Transverse colon (tissue), 4 donors: ENCODE measurements at regions of chr4 and their contacts with region 1.

Region 1: GRCh38 chr4:54217642-54218495 is 11.2 kb upstream of the PDGFRA start:
- DNase-seq: peak; percentile 69
- H3K4me3 ChIP-seq: peak overlapping the region in 2 of 4 donors; percentile 4 to 40
- H3K27ac ChIP-seq: peak overlapping the region in 1 of 4 donors; percentile 34
- H3K4me1 ChIP-seq: peaks cover 0 to 10% (median 1%) of the 10 kb centered on the region in 4 donors
- H3K27me3 ChIP-seq: peaks cover 34% of the 10 kb centered on the region
- CTCF ChIP-seq: peak; percentile 90 to 94 (median 91)
- EP300 ChIP-seq: no peak
- POLR2A ChIP-seq: no peak

Region 2: DNA sequence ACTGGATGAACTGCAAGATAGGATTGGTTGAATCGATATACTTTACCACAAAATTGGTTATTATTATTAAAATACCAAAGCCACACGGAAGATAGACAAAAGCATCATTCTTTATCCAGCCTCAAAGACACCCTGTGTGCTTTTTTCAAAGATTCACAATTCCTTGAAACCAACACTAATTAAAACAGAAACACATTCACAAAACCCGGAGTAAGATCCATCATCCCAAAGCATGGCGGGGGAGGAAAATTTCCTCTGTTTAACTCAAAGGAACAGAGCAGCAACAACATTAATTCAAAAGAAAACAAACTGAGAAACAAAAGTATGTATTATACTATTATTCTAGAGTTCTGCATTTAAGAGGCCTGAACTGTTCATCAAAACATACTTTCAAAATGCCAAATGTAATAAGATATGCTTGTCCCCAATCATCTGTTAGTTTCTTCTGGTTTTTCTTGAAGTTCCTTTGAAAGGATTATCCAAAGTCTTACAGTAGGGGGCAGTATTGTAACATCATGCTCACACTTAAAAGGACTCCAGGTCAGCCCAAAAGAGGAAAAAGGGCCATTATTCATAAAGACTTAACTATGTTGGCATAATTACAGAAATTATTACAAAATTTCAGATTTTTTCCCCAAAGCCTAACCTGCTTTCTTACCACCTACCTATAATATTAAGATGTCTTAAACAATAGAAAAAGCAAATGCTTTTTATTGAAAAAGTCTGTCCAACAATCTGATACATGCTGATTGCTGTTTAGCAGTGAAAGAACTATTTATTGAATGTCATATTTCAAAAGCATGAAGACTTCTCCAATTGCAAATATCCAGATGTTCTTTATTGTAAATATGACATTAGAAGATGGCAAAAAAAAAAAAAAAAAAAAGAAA is 1020.7 kb before region 1 on chr4:
- in situ Hi-C with region 1: loop called in 3 of 4 experiments (anchors 10 to 25 kb)
- intact Hi-C with region 1: no loop called
- DNase-seq: no peak
- H3K4me3 ChIP-seq: no peak overlapping the region
- H3K27ac ChIP-seq: no peak overlapping the region
- H3K4me1 ChIP-seq: no peaks in the 10 kb centered on the region
- H3K27me3 ChIP-seq: no peaks in the 10 kb centered on the region
- CTCF ChIP-seq: peak; percentile 67 to 78 (median 74)
- EP300 ChIP-seq: no peak
- POLR2A ChIP-seq: no peak

Region 3: GRCh38 chr4:53365486-53366300 is 852.2 kb before region 1 on chr4 and contains the start of gene SCFD2:
- in situ Hi-C with region 1: loop called in 1 of 4 experiments (anchors 25 kb)
- intact Hi-C with region 1: no loop called
- DNase-seq: peak; percentile 99
- H3K4me3 ChIP-seq: peak within 1 kb of the TSS; percentile 62 to 95 (median 69)
- H3K27ac ChIP-seq: peak within 1 kb of the TSS; percentile 53 to 83 (median 68)
- H3K4me1 ChIP-seq: peaks cover 3 to 38% (median 16%) of the 10 kb centered on the region in 4 donors
- H3K27me3 ChIP-seq: no peaks in the 10 kb centered on the region
- CTCF ChIP-seq: no peak
- EP300 ChIP-seq: no peak
- POLR2A ChIP-seq: no peak
- total RNA-seq, gene SCFD2: 12.7 to 23.7 (median 18.3) TPM

Region 4: DNA sequence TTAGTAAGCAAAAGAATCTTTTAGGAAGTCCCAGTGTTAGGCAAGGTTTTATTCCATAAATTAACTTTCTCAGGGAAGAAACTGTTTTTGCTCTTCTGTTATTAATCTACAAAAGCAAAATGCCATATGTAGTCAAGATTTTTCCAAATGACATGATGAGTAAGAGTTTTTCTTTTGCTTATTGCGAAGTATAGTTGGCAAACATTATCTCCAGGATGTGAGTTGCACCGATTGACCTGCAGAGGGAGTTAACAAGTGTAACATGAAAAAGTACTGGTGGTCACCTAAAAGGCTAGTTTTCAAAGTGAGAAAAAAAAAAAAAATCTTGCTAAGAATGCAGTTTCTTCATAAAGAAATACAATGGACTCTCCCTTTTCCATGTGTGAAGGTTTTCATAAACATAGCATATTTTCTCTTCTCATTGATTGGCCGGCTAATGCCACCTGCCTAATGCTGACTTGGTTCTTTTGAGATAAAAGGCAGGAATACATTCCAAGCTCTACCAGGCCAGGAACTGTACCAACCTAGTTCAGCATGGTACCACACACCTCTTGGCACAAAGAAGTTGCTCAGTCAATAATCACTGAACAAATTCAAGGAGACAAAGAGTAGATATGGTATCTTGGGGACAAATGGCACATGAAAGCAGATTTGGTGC is 726.8 kb before region 1 on chr4:
- in situ Hi-C with region 1: loop called in 1 of 4 experiments (anchors 25 kb)
- intact Hi-C with region 1: no loop called
- DNase-seq: peak; percentile 30
- H3K4me3 ChIP-seq: no peak overlapping the region
- H3K27ac ChIP-seq: peak overlapping the region; percentile 28 to 46 (median 38)
- H3K4me1 ChIP-seq: no peaks in the 10 kb centered on the region
- H3K27me3 ChIP-seq: no peaks in the 10 kb centered on the region
- CTCF ChIP-seq: peak; percentile 51 to 72 (median 60)
- EP300 ChIP-seq: no peak
- POLR2A ChIP-seq: no peak

Region 5: GRCh38 chr4:53702334-53703266 is 515.3 kb before region 1 on chr4:
- in situ Hi-C with region 1: loop called in 1 of 4 experiments (anchors 25 kb)
- intact Hi-C with region 1: no loop called
- DNase-seq: peak; percentile 82
- H3K4me3 ChIP-seq: peak overlapping the region in 2 of 4 donors; percentile 12 to 15
- H3K27ac ChIP-seq: peak overlapping the region; percentile 49 to 67 (median 54)
- H3K4me1 ChIP-seq: peaks cover 5 to 22% (median 14%) of the 10 kb centered on the region in 4 donors
- H3K27me3 ChIP-seq: no peaks in the 10 kb centered on the region
- CTCF ChIP-seq: no peak
- EP300 ChIP-seq: no peak
- POLR2A ChIP-seq: no peak

Region 6: GRCh38 chr4:53929955-53930798 is 287.7 kb before region 1 on chr4:
- in situ Hi-C with region 1: loop called (anchors 5 to 10 kb)
- intact Hi-C with region 1: loop called (anchors 5 kb)
- DNase-seq: peak; percentile 69
- H3K4me3 ChIP-seq: no peak overlapping the region
- H3K27ac ChIP-seq: no peak overlapping the region
- H3K4me1 ChIP-seq: no peaks in the 10 kb centered on the region
- H3K27me3 ChIP-seq: peaks cover 15% of the 10 kb centered on the region
- CTCF ChIP-seq: peak; percentile 59 to 77 (median 64)
- EP300 ChIP-seq: no peak
- POLR2A ChIP-seq: no peak

Region 7: GRCh38 chr4:54187148-54187547 is 30.7 kb before region 1 on chr4:
- in situ Hi-C with region 1: no loop called
- intact Hi-C with region 1: no loop called
- DNase-seq: peak; percentile 11
- H3K4me3 ChIP-seq: no peak overlapping the region
- H3K27ac ChIP-seq: no peak overlapping the region
- H3K4me1 ChIP-seq: no peaks in the 10 kb centered on the region
- H3K27me3 ChIP-seq: no peaks in the 10 kb centered on the region
- CTCF ChIP-seq: no peak
- EP300 ChIP-seq: no peak
- POLR2A ChIP-seq: no peak

Region 8: GRCh38 chr4:54233277-54233696 is 15.4 kb after region 1 on chr4:
- in situ Hi-C with region 1: no loop called
- intact Hi-C with region 1: no loop called
- DNase-seq: peak; percentile 81
- H3K4me3 ChIP-seq: peak overlapping the region; percentile 19 to 56 (median 37)
- H3K27ac ChIP-seq: peak overlapping the region; percentile 55 to 79 (median 69)
- H3K4me1 ChIP-seq: peaks cover 4 to 48% (median 29%) of the 10 kb centered on the region in 4 donors
- H3K27me3 ChIP-seq: peaks cover 76% of the 10 kb centered on the region
- CTCF ChIP-seq: peak; percentile 63 to 84 (median 72)
- EP300 ChIP-seq: no peak
- POLR2A ChIP-seq: no peak